Activated naive CD4-positive, alpha-beta T cell treated with anti-CD3 and anti-CD28 coated beads for 36 hours (primary cell): ENCODE measurements at regions of chr2 and their contacts with region 1.

Region 1: DNA sequence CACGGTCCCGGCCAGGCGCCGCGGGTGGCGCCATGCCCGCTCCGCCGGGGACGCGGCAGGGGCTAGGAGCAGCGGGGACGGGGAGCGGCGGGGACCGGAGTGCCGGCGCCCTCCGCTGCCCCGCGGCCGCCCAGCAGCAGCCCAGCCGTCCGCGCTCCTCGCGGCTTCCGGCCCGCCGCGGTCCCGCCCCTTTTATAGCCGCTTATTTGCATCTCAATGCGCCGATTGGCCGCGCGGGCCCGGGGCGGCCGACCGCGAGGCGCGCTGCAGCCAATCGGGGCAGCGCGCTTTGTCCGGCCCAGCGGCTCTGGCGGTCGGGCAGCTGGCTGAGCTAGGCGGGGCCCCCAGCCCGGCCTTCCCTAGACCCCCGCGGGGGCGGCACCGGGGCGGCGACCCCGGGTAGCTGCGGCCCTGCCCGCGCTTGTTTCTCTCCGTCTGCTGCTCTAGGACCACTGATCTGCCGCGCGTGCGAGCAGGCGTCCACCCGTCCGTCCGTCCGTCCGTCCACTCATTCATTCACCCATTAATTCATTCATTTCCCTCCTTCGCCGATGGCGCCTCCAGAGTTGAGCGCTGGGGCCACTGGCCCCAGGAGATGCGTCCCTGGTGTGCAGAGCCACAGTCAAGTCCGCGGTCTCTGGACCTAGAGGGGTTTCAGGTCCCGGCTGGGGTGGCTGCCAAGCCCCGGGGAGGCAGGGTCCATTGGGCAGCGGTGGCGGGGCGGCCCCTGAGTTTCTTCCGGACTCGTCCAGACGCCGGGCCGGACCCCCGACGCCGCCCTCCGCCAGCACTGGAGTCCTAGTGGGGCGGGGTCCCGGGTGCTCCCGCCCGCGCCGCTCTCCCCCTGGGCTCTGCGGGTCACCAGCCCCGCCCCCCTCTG is at the start of gene HES6:
- DNase-seq: peak; percentile 78
- H3K4me3 Mint-ChIP-seq: peak within 1 kb of the TSS; percentile 82
- H3K27ac Mint-ChIP-seq: no peak within 1 kb of the TSS
- H3K4me1 Mint-ChIP-seq: peaks cover 4% of the 10 kb centered on the region
- H3K27me3 Mint-ChIP-seq: peaks cover 24% of the 10 kb centered on the region
- total RNA-seq, gene HES6: 3.1 to 4.0 TPM

Region 2: DNA sequence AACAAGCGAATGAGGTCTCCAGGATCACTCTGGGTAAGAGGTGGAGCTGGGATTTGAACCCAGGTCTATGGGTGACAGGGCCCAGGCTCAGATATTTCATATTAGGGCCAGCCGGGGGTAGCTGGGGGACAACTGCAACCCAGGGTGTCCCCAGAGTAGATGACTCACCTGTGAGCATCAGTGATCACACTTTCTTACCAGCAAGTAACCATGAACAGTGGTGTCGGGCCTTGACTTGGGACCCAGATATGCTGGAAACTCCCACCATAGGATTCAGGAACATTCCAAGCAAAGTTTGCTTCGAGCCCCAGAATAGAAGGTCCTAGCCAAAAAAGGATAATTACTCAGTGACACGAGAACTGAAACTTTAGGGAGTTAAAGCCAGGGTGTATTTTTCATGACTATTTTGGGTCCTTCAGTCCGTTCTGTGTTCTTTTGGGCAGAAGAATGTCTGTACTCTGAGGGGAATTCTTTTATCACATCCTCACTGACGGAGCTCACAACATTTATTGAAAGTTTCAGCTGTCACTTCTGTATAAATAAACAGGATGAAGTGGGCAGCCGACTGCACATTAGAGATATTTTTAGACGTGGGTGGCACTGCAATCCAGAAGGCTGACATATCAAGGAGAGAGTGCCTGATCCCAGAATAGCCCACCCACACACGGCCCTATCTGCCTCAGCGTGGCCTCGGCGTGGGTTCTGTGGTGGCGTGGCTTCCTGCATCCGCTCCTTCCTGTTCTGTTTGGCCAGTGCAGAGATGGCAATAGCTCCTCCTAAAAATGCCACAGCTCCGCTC is 335.1 kb before region 1 on chr2:
- CTCF ChIA-PET with region 1: no interaction called
- intact Hi-C with region 1: no loop called
- DNase-seq: peak; percentile 41
- H3K4me3 Mint-ChIP-seq: peak overlapping the region; percentile 21
- H3K27ac Mint-ChIP-seq: peak overlapping the region; percentile 61
- H3K4me1 Mint-ChIP-seq: peaks cover 34% of the 10 kb centered on the region
- H3K27me3 Mint-ChIP-seq: no peaks in the 10 kb centered on the region

Region 3: GRCh38 chr2:238158527-238159070 is 81.5 kb before region 1 on chr2 and contains the start of gene ERFE:
- CTCF ChIA-PET with region 1: no interaction called
- intact Hi-C with region 1: loop called (anchors 5 kb)
- DNase-seq: peak; percentile 61
- H3K4me3 Mint-ChIP-seq: peak within 1 kb of the TSS; percentile 62
- H3K27ac Mint-ChIP-seq: no peak within 1 kb of the TSS
- H3K4me1 Mint-ChIP-seq: peaks cover 7% of the 10 kb centered on the region
- H3K27me3 Mint-ChIP-seq: peaks cover 17% of the 10 kb centered on the region
- total RNA-seq, gene ERFE: 0.40 TPM in 1 of 2 experiments, not detected in the other

Region 4: DNA sequence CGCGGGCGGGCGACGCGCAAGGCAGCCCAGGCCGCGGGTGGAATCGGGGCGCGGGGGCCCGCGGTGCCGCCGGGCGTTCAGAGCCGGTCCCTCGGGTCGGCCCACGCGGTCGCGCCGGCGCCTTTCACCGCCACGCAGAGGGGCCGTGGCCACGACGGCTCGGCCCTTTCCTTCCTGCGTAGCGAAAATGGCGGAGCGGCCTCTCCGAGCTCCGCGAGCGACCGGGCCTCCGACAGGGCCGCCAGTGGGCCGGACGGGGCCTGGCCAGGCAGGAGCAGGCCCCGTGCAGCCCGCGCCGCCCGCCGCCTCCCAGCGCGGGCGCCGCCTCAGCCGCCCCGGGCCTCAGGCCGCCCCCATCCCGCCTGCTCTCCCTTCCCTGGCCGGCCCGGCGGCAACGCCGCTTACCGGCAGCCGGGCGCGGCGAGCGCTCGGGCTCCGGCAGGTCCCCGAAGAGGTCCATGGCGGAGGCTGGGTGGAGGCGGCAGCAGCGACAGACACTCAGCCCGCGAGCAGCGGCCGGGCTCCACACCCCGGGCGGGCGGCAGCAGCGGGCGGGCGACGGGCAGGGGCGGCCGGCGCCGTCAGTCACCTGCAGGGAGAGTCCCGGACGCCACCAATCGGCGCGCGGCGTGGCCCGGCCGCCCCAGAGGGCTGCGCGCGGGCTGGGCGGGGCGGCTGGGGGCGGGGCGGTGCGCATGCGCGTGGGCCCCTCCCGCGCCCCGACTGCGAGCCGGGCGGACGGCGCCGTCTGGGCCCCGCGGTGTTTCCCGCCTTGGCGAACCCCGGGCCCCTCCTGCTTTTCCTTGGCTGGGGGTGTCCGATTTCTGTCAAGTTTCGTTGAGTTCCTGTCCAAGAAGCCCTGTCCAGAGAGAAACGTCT is 36.8 kb before region 1 on chr2 and contains the start of gene ILKAP:
- CTCF ChIA-PET with region 1: no interaction called
- intact Hi-C with region 1: loop called (anchors 1 kb)
- DNase-seq: peak; percentile 89
- H3K4me3 Mint-ChIP-seq: peak within 1 kb of the TSS; percentile 80
- H3K27ac Mint-ChIP-seq: peak within 1 kb of the TSS; percentile 77
- H3K4me1 Mint-ChIP-seq: peaks cover 41% of the 10 kb centered on the region
- H3K27me3 Mint-ChIP-seq: no peaks in the 10 kb centered on the region
- total RNA-seq, gene ILKAP: 46.6 to 46.7 TPM

Region 5: GRCh38 chr2:240131931-240132650 is 1892.0 kb after region 1 on chr2:
- CTCF ChIA-PET with region 1: no interaction called
- intact Hi-C with region 1: no loop called
- DNase-seq: no peak
- H3K4me3 Mint-ChIP-seq: no peak overlapping the region
- H3K27ac Mint-ChIP-seq: no peak overlapping the region
- H3K4me1 Mint-ChIP-seq: peaks cover 22% of the 10 kb centered on the region
- H3K27me3 Mint-ChIP-seq: no peaks in the 10 kb centered on the region